ENCODE measurements at regions of chr19 and their contacts with region 1.

Region 1: DNA sequence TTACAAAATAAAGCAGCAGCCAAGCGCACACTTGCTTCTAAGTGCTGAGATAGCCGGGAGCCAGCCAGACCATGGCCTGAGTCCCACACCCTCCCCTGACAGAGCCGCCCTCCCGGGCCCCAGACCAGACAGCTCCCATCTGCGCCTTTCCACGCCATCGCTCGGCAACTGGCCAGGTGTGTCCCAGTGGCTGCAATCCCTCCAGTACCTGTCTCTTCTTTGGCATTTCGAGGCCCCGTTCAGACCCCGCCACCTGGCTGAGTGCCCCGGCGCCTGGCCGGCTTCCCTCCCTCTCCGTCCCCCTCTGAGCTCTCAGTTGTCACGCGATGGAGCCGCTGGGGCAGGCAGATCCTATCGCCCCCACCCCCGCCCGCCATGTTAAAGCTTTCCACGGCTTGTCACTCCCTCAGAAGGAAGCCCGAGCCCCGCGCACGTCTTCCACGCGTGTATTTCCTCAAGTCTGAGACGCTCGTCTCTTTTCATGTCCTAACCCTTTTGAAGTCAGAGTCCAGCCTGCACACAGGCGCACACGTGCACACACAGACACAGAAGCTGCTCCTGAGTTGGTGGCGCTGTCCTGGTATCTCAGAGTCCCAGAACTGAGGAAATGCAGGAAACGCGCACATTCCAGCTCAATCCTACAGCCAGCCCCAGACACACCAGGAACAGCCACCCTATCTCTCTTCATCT is 7.9 kb downstream of the MLLT1 start:
- DNase-seq: no peak
- H3K4me3 ChIP-seq: peak overlapping the region; percentile 21
- H3K27ac ChIP-seq: peak overlapping the region; percentile 78
- H3K27me3 ChIP-seq: no peaks in the 10 kb centered on the region
- CTCF ChIP-seq: 0 out of 2 replicates have a peak, but pooled peaks have one; percentile 4

Region 2: DNA sequence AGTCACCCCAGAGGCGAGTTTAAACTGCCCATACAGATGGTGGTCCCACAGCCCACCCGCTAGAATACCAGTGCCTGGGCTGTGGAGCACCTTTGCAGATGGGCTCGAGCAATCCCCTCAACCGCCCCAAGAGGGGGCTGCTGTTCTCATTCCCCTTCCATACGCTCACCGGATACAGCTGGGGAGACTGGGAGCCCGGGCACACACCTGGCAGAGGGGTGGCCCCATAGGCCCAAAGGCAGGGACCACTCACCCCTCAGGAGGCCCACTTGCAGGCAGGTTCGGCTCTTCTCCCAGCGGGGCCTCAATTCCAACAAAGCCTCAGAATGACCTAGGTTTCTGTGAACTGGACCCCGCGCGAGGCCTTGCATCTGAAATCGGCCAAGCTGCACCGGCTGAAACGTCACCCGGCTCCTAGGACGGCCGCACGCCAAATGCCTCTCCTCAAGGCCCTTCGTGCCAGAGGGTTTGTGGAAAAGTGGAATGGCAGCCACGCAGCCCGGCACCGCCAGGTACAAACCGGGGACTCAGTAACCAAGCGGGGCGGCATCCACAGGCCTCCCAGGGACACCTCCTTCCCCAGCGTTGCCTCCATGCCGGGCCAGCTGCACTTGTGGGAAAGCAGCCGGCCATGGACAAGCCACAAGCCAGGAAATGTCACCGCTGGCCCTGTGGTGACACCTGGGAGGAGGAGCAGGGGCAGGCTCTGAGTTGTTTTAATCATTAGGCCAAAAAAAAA is 10.8 kb before region 1 on chr19:
- CTCF ChIA-PET with region 1: interaction called, 11 read pairs
- POLR2A ChIA-PET with region 1: no interaction called
- DNase-seq: no peak
- H3K4me3 ChIP-seq: no peak overlapping the region
- H3K27ac ChIP-seq: no peak overlapping the region
- H3K27me3 ChIP-seq: no peaks in the 10 kb centered on the region
- CTCF ChIP-seq: peak; percentile 59

Region 3: DNA sequence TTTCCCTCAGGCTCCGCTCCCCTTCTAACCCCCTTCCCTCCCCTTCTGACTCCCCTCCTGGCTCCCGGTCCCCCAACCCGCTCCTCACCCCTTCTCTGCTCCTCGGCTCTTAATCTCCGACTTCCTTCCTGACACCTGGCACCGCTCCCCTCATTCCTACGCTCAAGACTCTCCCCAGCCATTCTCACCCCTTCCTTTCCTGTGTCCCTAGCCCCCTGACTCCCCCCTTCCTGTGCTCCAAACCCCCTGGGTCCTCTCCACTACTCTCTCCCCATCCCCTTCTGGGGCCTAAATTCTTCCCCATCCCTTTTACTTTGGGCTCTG is 90.1 kb after region 1 on chr19:
- CTCF ChIA-PET with region 1: interaction called, 4 read pairs
- POLR2A ChIA-PET with region 1: interaction called, 10 read pairs
- DNase-seq: no peak
- H3K4me3 ChIP-seq: peak overlapping the region; percentile 75
- H3K27ac ChIP-seq: peak overlapping the region; percentile 11
- H3K27me3 ChIP-seq: no peaks in the 10 kb centered on the region
- CTCF ChIP-seq: no peak